ENCODE measurements at regions of chr10 and their contacts with region 1.

Region 1: GRCh38 chr10:86971232-86971991 is 3.1 kb downstream of the ADIRF start:
- DNase-seq: peak; percentile 89
- CTCF ChIP-seq: no peak

Region 2: GRCh38 chr10:86945361-86946212 is 25.8 kb before region 1 on chr10:
- CTCF ChIA-PET with region 1: interaction called, 238 read pairs
- POLR2A ChIA-PET with region 1: no interaction called
- DNase-seq: no peak
- CTCF ChIP-seq: no peak

Region 3: GRCh38 chr10:86960003-86960862 is 11.2 kb before region 1 on chr10:
- CTCF ChIA-PET with region 1: interaction called, 27 read pairs
- POLR2A ChIA-PET with region 1: interaction called, 5 read pairs
- DNase-seq: peak; percentile 86
- CTCF ChIP-seq: peak; percentile 83

Region 4: GRCh38 chr10:87560495-87561129 is 589.2 kb after region 1 on chr10:
- CTCF ChIA-PET with region 1: no interaction called
- POLR2A ChIA-PET with region 1: interaction called, 12 read pairs
- DNase-seq: no peak
- CTCF ChIP-seq: no peak

Measured in GM10248 (cell line).